ENCODE measurements at regions of chr13 and their contacts with region 1.

Region 1: DNA sequence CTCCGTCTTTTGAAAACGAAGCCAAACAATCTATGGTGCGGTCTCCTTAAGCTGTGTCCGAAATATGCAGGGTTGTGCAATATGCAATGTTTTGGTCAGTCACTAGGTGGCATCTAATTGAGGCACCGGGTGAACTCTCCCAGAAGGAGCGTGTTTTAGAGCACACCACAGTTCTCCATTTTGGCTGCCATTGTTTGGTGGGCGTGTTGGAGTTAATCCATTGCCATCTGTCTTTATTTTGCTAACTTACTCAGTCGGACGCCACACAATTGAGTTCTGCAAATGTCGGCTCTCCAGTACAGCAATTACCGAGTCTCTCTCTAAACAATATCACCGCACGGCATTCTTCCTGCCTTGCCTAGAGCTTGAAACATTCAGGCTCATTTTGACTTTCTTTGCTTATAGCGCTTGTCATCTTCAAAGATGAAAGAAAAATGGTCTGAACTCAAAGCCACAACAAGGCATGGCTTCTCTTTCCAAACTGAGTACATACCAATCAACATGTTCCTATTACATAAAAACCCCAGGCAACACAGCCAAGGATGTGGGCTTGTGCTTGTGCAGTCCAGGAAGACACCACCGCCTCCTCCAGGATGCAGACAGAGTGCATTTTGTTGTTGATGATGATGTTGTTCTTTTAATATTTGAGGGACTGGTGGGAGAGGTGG is 182.0 kb upstream of the SERP2 start:
- DNase-seq: peak; percentile 63
- ATAC-seq: peak; percentile 60
- H3K4me3 Mint-ChIP-seq: peak overlapping the region; percentile 10
- H3K27ac Mint-ChIP-seq: peak overlapping the region; percentile 21
- H3K4me1 Mint-ChIP-seq: peaks cover 30% of the 10 kb centered on the region
- H3K27me3 Mint-ChIP-seq: peaks cover 17% of the 10 kb centered on the region

Region 2: DNA sequence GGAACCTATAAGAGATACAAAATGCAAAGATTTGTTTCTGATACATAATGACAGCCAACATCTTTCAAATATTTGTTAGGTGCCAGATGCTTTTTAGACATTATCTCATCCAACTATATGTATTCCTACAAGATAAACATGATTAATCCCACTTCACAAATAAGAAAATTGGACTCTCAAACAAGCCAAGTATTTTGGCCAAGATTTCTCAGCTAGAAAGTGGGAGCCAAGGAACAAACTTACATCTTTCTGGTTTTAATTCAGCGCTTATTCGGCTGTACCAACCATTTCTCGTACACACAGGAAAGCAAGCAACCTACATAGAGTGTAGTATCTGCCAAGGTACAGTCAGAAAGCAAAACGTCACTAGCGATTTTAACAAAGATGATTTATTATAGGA is 96.3 kb after region 1 on chr13:
- CTCF ChIA-PET with region 1: no interaction called
- POLR2A ChIA-PET with region 1: no interaction called
- intact Hi-C with region 1: no loop called
- DNase-seq: no peak
- ATAC-seq: no peak
- H3K4me3 Mint-ChIP-seq: no peak overlapping the region
- H3K27ac Mint-ChIP-seq: no peak overlapping the region
- H3K4me1 Mint-ChIP-seq: peaks cover 7% of the 10 kb centered on the region
- H3K27me3 Mint-ChIP-seq: peaks cover 37% of the 10 kb centered on the region

Region 3: GRCh38 chr13:44373601-44374348 is 182.1 kb after region 1 on chr13 and contains the start of gene SERP2:
- CTCF ChIA-PET with region 1: no interaction called
- POLR2A ChIA-PET with region 1: no interaction called
- intact Hi-C with region 1: loop called in 1 of 2 experiments (anchors 10 kb)
- DNase-seq: peak; percentile 31
- ATAC-seq: peak; percentile 51
- H3K4me3 Mint-ChIP-seq: peak within 1 kb of the TSS; percentile 36
- H3K27ac Mint-ChIP-seq: peak within 1 kb of the TSS; percentile 43
- H3K4me1 Mint-ChIP-seq: peaks cover 10% of the 10 kb centered on the region
- H3K27me3 Mint-ChIP-seq: peaks cover 30% of the 10 kb centered on the region
- total RNA-seq, gene SERP2: 0.63 to 0.98 TPM